Naive thymus-derived CD4-positive, alpha-beta T cell (primary cell): ENCODE measurements at regions of chr16 and their contacts with region 1.

Region 1: GRCh38 chr16:90077226-90077756 is at the start of gene PRDM7:
- DNase-seq: peak; percentile 87 to 98 (median 94)
- ATAC-seq: peak; percentile 95
- H3K4me3 ChIP-seq: peak within 1 kb of the TSS; percentile 59
- H3K4me3 Mint-ChIP-seq: peak within 1 kb of the TSS; percentile 82 to 97 (median 90)
- H3K27ac ChIP-seq: peak within 1 kb of the TSS; percentile 58
- H3K27ac Mint-ChIP-seq: peak within 1 kb of the TSS; percentile 66 to 94 (median 81)
- H3K4me1 ChIP-seq: peaks cover 0 to 10% of the 10 kb centered on the region in 2 donors
- H3K4me1 Mint-ChIP-seq: peaks cover 14 to 28% (median 22%) of the 10 kb centered on the region in 7 donors
- H3K27me3 ChIP-seq: no peaks in the 10 kb centered on the region
- H3K27me3 Mint-ChIP-seq: peaks cover 0 to 23% (median 13%) of the 10 kb centered on the region in 5 donors
- total RNA-seq, gene PRDM7: not detected

Region 2: GRCh38 chr16:89545831-89546574 is 531.3 kb before region 1 on chr16:
- CTCF ChIA-PET with region 1: no interaction called
- POLR2A ChIA-PET with region 1: no interaction called
- intact Hi-C with region 1: no loop called
- DNase-seq: no peak
- ATAC-seq: no peak
- H3K4me3 ChIP-seq: no peak overlapping the region
- H3K4me3 Mint-ChIP-seq: no peak overlapping the region
- H3K27ac ChIP-seq: no peak overlapping the region
- H3K27ac Mint-ChIP-seq: peak overlapping the region in 1 of 9 donors; percentile 46
- H3K4me1 ChIP-seq: peaks cover 0 to 19% of the 10 kb centered on the region in 2 donors
- H3K4me1 Mint-ChIP-seq: peaks cover 13 to 32% (median 19%) of the 10 kb centered on the region in 7 donors
- H3K27me3 ChIP-seq: no peaks in the 10 kb centered on the region
- H3K27me3 Mint-ChIP-seq: no peaks in the 10 kb centered on the region

Region 3: GRCh38 chr16:89972244-89973234 is 104.8 kb before region 1 on chr16:
- CTCF ChIA-PET with region 1: no interaction called
- POLR2A ChIA-PET with region 1: interaction called, 3 read pairs
- intact Hi-C with region 1: loop called in 1 of 2 experiments (anchors 1 kb)
- DNase-seq: peak; percentile 86 to 97 (median 92)
- ATAC-seq: peak; percentile 96
- H3K4me3 ChIP-seq: peak overlapping the region; percentile 97
- H3K4me3 Mint-ChIP-seq: peak overlapping the region; percentile 96 to 100 (median 99)
- H3K27ac ChIP-seq: peak overlapping the region; percentile 82
- H3K27ac Mint-ChIP-seq: peak overlapping the region; percentile 89 to 99 (median 96)
- H3K4me1 ChIP-seq: peaks cover 12 to 22% of the 10 kb centered on the region in 2 donors
- H3K4me1 Mint-ChIP-seq: peaks cover 13 to 45% (median 30%) of the 10 kb centered on the region in 7 donors
- H3K27me3 ChIP-seq: no peaks in the 10 kb centered on the region
- H3K27me3 Mint-ChIP-seq: peaks cover 0 to 2% (median 0%) of the 10 kb centered on the region in 5 donors

Region 4: GRCh38 chr16:90047714-90048371 is 29.4 kb before region 1 on chr16:
- CTCF ChIA-PET with region 1: no interaction called
- POLR2A ChIA-PET with region 1: no interaction called
- intact Hi-C with region 1: loop called in 1 of 2 experiments (anchors 2 kb)
- DNase-seq: peak in 3 of 9 donors; percentile 5 to 26 (median 10)
- ATAC-seq: peak; percentile 65
- H3K4me3 ChIP-seq: no peak overlapping the region
- H3K4me3 Mint-ChIP-seq: peak overlapping the region; percentile 19 to 71 (median 59)
- H3K27ac ChIP-seq: no peak overlapping the region
- H3K27ac Mint-ChIP-seq: peak overlapping the region in 8 of 9 donors; percentile 12 to 90 (median 56)
- H3K4me1 ChIP-seq: peaks cover 9 to 10% of the 10 kb centered on the region in 2 donors
- H3K4me1 Mint-ChIP-seq: peaks cover 0 to 19% (median 8%) of the 10 kb centered on the region in 7 donors
- H3K27me3 ChIP-seq: peaks cover 0 to 8% of the 10 kb centered on the region in 2 donors
- H3K27me3 Mint-ChIP-seq: peaks cover 3 to 27% (median 12%) of the 10 kb centered on the region in 5 donors